Right cardiac atrium (tissue), 5 donors: ENCODE measurements at regions of chr18 and their contacts with region 1.

Region 1: DNA sequence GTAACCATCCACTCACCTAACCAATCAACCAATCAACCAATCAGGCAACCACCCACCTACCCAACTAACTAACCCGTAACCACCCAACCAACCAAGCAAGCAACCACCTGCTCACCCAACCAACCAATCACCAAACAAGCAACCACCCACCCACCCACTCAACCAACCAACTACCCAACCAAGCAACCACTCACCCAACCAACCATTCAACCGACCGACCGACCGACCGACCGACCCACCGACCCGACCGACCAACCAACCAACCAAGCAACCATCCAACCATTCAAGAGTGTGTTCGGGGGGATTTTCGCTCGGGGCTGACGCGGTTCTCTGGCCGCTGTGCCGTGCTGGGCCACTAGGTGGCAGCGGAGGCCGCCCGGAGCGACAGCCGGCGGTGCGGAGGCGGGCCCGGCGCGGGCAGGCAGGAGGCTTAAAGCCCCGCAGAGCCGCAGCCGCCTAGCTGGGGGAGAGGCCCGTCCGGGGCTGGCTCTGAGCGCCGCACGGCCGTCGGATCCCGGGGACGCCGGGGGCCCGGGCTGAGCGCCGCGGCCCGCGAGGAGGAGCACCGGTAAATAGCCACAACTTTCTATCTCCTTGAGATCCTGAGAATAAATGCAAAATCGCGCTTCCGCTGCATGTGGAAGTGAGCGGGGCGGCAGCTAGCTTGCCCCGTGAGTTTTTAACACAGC is at the start of gene MC5R:
- DNase-seq: peak; percentile 72 to 86 (median 85)
- ATAC-seq: peak; percentile 86 to 95
- H3K4me3 ChIP-seq: peak within 1 kb of the TSS; percentile 62
- H3K27ac ChIP-seq: no peak within 1 kb of the TSS
- H3K4me1 ChIP-seq: no peaks in the 10 kb centered on the region
- H3K27me3 ChIP-seq: no peaks in the 10 kb centered on the region
- total RNA-seq, gene MC5R: not detected

Region 2: DNA sequence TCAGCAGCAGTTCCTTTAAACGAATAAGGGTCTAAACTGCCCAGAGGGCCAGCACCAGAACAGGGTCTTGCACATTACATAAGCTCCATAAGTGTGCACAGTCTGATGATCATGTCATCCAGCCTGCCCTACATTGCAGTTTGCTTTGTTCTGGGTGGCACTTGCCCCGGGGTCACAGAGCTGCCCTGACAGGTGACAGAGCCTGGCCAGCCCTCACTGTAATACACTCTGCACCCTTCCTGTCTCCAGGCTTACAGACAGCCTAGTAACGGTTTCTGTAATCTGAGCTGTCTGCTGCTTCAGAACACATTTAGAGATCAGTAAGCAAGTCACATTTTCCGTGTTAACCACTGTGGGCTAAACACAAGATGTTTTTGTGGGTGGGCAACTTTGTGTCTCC is 310.8 kb before region 1 on chr18:
- intact Hi-C with region 1: no loop called
- DNase-seq: no peak
- ATAC-seq: peak; percentile 84 to 86
- H3K4me3 ChIP-seq: no peak overlapping the region
- H3K27ac ChIP-seq: no peak overlapping the region
- H3K4me1 ChIP-seq: peaks cover 3% of the 10 kb centered on the region
- H3K27me3 ChIP-seq: no peaks in the 10 kb centered on the region

Region 3: GRCh38 chr18:13688191-13689136 is 135.4 kb before region 1 on chr18:
- intact Hi-C with region 1: no loop called
- DNase-seq: peak in 1 of 3 donors; percentile 67
- ATAC-seq: peak; percentile 87 to 91
- H3K4me3 ChIP-seq: no peak overlapping the region
- H3K27ac ChIP-seq: peak overlapping the region; percentile 53
- H3K4me1 ChIP-seq: peaks cover 3% of the 10 kb centered on the region
- H3K27me3 ChIP-seq: no peaks in the 10 kb centered on the region

Region 4: DNA sequence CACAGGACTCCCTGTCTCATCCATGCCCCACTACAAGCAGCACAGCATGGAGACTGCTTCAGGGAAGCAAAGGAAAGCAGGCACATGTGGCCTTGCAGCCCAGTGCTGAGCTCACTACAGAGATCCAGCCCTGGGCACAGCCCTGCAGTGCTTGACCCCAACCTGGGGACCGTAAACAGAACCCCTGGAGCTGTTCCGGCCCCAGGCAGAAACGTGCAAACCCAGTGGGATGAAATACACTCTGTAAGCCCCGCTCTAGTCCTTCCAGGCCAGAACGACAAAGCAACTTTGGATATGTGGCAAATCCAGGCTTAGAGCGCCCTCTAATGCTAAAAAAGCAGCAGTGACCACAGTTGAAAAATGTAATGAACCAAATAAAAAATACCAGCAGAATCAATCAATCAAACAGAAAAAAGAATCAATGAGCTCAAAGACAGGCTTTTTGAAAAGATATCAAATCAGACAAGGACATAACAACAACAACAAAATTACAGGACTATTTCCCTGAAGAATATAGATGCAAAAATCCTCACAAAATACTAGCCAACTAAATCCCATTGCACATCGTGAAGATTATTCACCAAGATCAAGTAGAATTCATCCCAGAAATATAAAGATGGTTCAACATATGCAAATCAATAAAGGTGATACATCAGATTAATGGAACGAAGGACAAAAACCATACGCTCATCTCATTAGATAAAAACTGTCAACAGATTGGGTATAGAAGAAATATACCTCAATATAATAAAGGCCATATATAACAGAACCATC is 262.8 kb after region 1 on chr18:
- intact Hi-C with region 1: loop called in 3 of 4 experiments (anchors 5 kb)
- DNase-seq: no peak
- ATAC-seq: peak; percentile 61 to 63
- H3K4me3 ChIP-seq: no peak overlapping the region
- H3K27ac ChIP-seq: no peak overlapping the region
- H3K4me1 ChIP-seq: no peaks in the 10 kb centered on the region
- H3K27me3 ChIP-seq: no peaks in the 10 kb centered on the region